ENCODE measurements at regions of chr7 and their contacts with region 1.

Region 1: DNA sequence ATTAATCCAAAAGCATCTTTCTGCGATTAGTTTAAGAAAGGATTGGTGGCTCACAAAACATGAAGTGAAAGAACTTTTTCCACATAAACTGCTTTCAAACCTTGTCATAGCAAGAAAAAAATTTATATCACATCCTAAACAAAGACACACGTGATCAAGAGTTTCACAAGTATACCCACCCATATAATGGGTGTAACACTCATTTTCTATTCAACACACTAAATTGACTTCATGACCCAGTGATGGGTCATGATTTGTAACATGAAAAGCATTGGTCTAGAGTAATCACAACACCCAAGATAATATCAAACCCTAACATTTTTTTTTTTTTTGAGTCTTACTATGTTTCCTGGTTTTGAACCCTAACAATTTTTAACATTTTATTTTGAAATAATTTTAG is 17.6 kb downstream of the PMPCB start:
- DNase-seq: no peak
- ATAC-seq: no peak
- H3K4me3 ChIP-seq: no peak overlapping the region
- H3K27ac ChIP-seq: no peak overlapping the region
- H3K4me1 ChIP-seq: peaks cover 0 to 6% (median 0%) of the 10 kb centered on the region in 12 donors
- H3K27me3 ChIP-seq: no peaks in the 10 kb centered on the region
- CTCF ChIP-seq: no peak
- POLR2A ChIP-seq: no peak

Region 2: GRCh38 chr7:103369430-103369829 is 54.6 kb after region 1 on chr7:
- intact Hi-C with region 1: loop called in 1 of 10 experiments (anchors 5 kb)
- DNase-seq: no peak
- ATAC-seq: no peak
- H3K4me3 ChIP-seq: no peak overlapping the region
- H3K27ac ChIP-seq: no peak overlapping the region
- H3K4me1 ChIP-seq: no peaks in the 10 kb centered on the region
- H3K27me3 ChIP-seq: no peaks in the 10 kb centered on the region
- CTCF ChIP-seq: no peak
- POLR2A ChIP-seq: no peak

Measured in heart left ventricle (tissue), 16 donors.